Thyroid gland (tissue), 4 donors: ENCODE measurements at regions of chr11 and their contacts with region 1.

Region 1: DNA sequence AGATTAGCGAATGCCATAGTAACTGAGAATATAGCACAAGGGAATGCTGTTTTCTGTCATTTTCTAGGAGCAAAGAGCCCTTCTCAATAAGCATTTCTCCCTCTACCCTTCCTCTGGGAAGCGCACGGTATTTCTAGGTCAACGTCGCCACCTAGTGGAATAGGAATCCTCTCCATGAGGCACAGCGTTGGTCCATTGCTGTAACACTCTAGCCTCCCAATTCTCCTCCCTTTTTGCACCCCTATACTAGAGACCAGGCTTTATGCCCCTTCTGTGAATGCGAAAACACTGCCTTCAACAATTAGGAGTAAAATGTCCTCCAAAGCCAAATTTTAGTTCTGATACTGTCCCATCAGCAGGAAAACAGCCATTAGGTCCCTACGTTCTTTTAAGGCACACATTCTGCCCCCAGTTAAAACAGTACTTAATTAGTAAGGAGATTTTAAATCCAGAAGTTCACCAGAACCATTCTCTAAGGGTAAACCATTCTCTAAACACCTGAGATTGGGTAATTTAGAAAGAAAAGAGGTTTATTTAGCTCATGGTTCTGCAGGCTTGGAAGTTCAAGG is 12.8 kb upstream of the HYLS1 start:
- DNase-seq: peak; percentile 48 to 49
- H3K4me3 ChIP-seq: no peak overlapping the region
- H3K27ac ChIP-seq: no peak overlapping the region
- H3K4me1 ChIP-seq: no peaks in the 10 kb centered on the region
- H3K27me3 ChIP-seq: no peaks in the 10 kb centered on the region
- CTCF ChIP-seq: peak; percentile 25 to 78 (median 62)
- POLR2A ChIP-seq: no peak

Region 2: GRCh38 chr11:125625630-125626287 is 248.9 kb before region 1 on chr11:
- intact Hi-C with region 1: loop called (anchors 10 kb)
- DNase-seq: peak; percentile 83 to 84
- H3K4me3 ChIP-seq: peak overlapping the region; percentile 12 to 67 (median 62)
- H3K27ac ChIP-seq: peak overlapping the region; percentile 89 to 95 (median 93)
- H3K4me1 ChIP-seq: peaks cover 9 to 15% of the 10 kb centered on the region in 2 donors
- H3K27me3 ChIP-seq: no peaks in the 10 kb centered on the region
- CTCF ChIP-seq: no peak
- POLR2A ChIP-seq: peak in 1 of 2 donors; percentile 73

Region 3: DNA sequence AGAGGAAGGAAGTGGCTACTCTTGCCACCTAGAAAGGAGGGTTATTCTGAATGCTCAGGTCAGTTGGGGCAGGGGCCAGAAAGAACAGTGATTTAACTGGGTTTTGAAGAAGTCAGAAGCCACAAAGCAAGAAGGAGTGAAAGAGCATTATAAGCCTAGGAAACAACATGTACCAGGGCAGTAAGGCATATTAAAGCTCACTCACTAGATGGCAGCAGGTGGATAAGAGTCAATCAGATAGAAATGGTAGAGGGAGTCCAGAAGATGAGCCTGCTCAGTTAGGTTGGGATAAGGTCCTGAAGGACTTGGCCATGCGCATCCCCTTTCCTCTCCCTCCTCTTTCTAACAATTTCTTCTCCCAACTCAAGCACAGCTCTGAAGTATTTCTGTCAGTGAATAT is 150.5 kb before region 1 on chr11:
- intact Hi-C with region 1: loop called (anchors 5 kb)
- DNase-seq: no peak
- H3K4me3 ChIP-seq: no peak overlapping the region
- H3K27ac ChIP-seq: no peak overlapping the region
- H3K4me1 ChIP-seq: no peaks in the 10 kb centered on the region
- H3K27me3 ChIP-seq: no peaks in the 10 kb centered on the region
- CTCF ChIP-seq: no peak
- POLR2A ChIP-seq: no peak